ENCODE measurements at regions of chr2 and their contacts with region 1.

Region 1: DNA sequence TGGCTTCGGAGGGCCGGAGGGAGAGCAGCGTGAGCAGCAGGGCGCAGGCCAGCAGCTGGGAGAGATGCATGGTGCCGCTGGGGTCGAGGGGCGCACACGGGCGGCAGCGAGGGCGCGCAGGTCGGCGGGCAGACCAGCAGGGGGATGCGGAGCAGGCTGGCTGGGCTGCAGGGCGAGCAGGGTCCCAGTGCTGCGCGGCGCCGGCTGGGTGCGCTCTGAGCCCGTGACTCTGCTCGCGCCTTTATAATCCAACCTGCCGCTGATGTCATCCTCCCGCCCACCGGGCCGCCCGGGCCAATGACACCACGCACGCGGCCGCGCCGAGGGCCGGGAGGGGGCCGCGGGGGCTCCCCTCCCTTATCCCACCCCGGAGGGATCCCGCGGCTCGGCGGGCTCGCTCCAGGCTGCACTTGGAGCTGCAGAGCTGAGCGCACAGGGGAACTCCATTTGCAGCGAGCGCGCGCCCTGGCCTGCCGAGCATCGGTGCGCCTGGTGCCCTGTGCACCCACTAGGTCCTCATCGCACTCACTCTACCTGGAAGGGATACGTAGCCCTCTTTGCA is at the start of gene NPPC:
- DNase-seq: peak in 28 of 35 experiments; percentile 8 to 62 (median 32)
- ATAC-seq: peak; percentile 67 to 85 (median 73)
- H3K4me3 ChIP-seq: peak within 1 kb of the TSS; percentile 34 to 67
- H3K4me3 Mint-ChIP-seq: peak within 1 kb of the TSS; percentile 49 to 77 (median 63)
- H3K27ac ChIP-seq: no peak within 1 kb of the TSS
- H3K27ac Mint-ChIP-seq: no peak within 1 kb of the TSS
- H3K4me1 ChIP-seq: peaks cover 2 to 26% of the 10 kb centered on the region in 2 experiments
- H3K4me1 Mint-ChIP-seq: peaks cover 9 to 24% (median 11%) of the 10 kb centered on the region in 3 donors
- H3K27me3 ChIP-seq: peaks cover 0 to 79% of the 10 kb centered on the region in 2 experiments
- H3K27me3 Mint-ChIP-seq: peaks cover 43 to 62% of the 10 kb centered on the region in 2 donors
- total RNA-seq, gene NPPC: 1.1 TPM in 1 of 5 donors, not detected in the others

Region 2: DNA sequence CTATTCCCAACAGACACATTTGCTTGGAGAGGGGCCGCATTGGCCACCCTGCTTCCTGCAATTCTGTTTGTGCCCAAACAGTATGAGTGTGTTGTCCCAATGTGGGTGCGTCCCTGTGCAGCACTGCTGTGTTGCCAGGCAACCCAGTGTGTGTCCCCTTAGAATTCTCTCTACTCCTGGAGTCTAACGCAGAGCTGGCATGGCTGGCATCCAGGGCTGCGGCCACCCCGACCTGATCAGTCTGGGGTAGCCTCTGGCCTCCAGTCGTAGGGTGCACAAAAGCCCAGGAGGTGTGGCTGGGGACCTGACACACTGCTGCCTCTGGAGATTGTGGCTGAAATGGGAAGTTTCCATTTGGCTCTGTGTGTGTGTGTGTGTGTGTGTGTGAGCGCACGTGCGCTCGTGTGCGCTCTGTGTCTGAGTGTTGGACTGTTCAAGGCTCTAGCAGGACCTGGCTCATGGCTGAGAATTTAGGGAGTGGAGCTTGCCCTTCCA is 285.6 kb before region 1 on chr2:
- CTCF ChIA-PET with region 1: no interaction called
- POLR2A ChIA-PET with region 1: no interaction called
- DNase-seq: no peak
- ATAC-seq: no peak
- H3K4me3 ChIP-seq: no peak overlapping the region
- H3K4me3 Mint-ChIP-seq: no peak overlapping the region
- H3K27ac ChIP-seq: no peak overlapping the region
- H3K27ac Mint-ChIP-seq: no peak overlapping the region
- H3K4me1 ChIP-seq: peaks cover 6 to 14% of the 10 kb centered on the region in 2 experiments
- H3K4me1 Mint-ChIP-seq: peaks cover 9 to 12% (median 10%) of the 10 kb centered on the region in 3 donors
- H3K27me3 ChIP-seq: peaks cover 0 to 14% of the 10 kb centered on the region in 2 experiments
- H3K27me3 Mint-ChIP-seq: no peaks in the 10 kb centered on the region

Region 3: GRCh38 chr2:231910771-231911170 is 15.5 kb before region 1 on chr2:
- CTCF ChIA-PET with region 1: no interaction called
- POLR2A ChIA-PET with region 1: no interaction called
- DNase-seq: no peak
- ATAC-seq: no peak
- H3K4me3 ChIP-seq: no peak overlapping the region
- H3K4me3 Mint-ChIP-seq: no peak overlapping the region
- H3K27ac ChIP-seq: no peak overlapping the region
- H3K27ac Mint-ChIP-seq: no peak overlapping the region
- H3K4me1 ChIP-seq: peaks cover 5 to 11% of the 10 kb centered on the region in 2 experiments
- H3K4me1 Mint-ChIP-seq: peaks cover 12 to 16% (median 12%) of the 10 kb centered on the region in 3 donors
- H3K27me3 ChIP-seq: peaks cover 0 to 9% of the 10 kb centered on the region in 2 experiments
- H3K27me3 Mint-ChIP-seq: no peaks in the 10 kb centered on the region

Region 4: GRCh38 chr2:231940795-231941194 is 14.5 kb after region 1 on chr2:
- CTCF ChIA-PET with region 1: no interaction called
- POLR2A ChIA-PET with region 1: no interaction called
- DNase-seq: no peak
- ATAC-seq: no peak
- H3K4me3 ChIP-seq: no peak overlapping the region
- H3K4me3 Mint-ChIP-seq: no peak overlapping the region
- H3K27ac ChIP-seq: no peak overlapping the region
- H3K27ac Mint-ChIP-seq: no peak overlapping the region
- H3K4me1 ChIP-seq: no peaks in the 10 kb centered on the region
- H3K4me1 Mint-ChIP-seq: no peaks in the 10 kb centered on the region
- H3K27me3 ChIP-seq: peaks cover 0 to 12% of the 10 kb centered on the region in 2 experiments
- H3K27me3 Mint-ChIP-seq: peaks cover 5 to 8% of the 10 kb centered on the region in 2 donors

Region 5: GRCh38 chr2:232459419-232460035 is 533.3 kb after region 1 on chr2:
- CTCF ChIA-PET with region 1: interaction called in 1 of 2 experiments, 12 read pairs
- POLR2A ChIA-PET with region 1: no interaction called
- DNase-seq: no peak
- ATAC-seq: no peak
- H3K4me3 ChIP-seq: no peak overlapping the region
- H3K4me3 Mint-ChIP-seq: no peak overlapping the region
- H3K27ac ChIP-seq: no peak overlapping the region
- H3K27ac Mint-ChIP-seq: no peak overlapping the region
- H3K4me1 ChIP-seq: no peaks in the 10 kb centered on the region
- H3K4me1 Mint-ChIP-seq: no peaks in the 10 kb centered on the region
- H3K27me3 ChIP-seq: peaks cover 0 to 49% of the 10 kb centered on the region in 2 experiments
- H3K27me3 Mint-ChIP-seq: peaks cover 16 to 37% of the 10 kb centered on the region in 2 donors

Region 6: DNA sequence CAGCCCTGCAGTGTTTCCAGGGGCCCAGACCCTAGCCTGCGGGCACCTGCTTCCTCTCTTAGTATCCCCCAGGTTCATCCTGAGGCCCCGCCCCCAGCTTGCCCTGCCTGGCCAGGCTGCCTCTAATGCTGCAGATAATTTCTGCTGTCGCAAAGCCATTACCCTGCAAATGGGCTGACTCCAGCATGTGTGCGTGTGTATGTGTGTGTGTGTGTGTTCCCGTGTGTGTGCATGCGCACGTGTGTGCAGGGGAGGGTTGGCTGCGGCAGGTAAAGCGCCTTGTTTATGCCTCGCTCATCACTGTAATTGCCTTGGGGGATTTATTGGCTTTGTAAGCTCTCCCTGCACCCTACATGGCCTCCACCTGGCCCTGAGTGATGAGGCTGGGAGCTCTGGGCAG is 586.3 kb after region 1 on chr2:
- CTCF ChIA-PET with region 1: no interaction called
- POLR2A ChIA-PET with region 1: no interaction called
- DNase-seq: no peak
- ATAC-seq: no peak
- H3K4me3 ChIP-seq: no peak overlapping the region
- H3K4me3 Mint-ChIP-seq: no peak overlapping the region
- H3K27ac ChIP-seq: no peak overlapping the region
- H3K27ac Mint-ChIP-seq: no peak overlapping the region
- H3K4me1 ChIP-seq: no peaks in the 10 kb centered on the region
- H3K4me1 Mint-ChIP-seq: no peaks in the 10 kb centered on the region
- H3K27me3 ChIP-seq: peaks cover 0 to 27% of the 10 kb centered on the region in 2 experiments
- H3K27me3 Mint-ChIP-seq: peaks cover 11 to 20% of the 10 kb centered on the region in 2 donors